Thyroid gland (tissue), 4 donors: ENCODE measurements at regions of chr20 and their contacts with region 1.

Region 1: DNA sequence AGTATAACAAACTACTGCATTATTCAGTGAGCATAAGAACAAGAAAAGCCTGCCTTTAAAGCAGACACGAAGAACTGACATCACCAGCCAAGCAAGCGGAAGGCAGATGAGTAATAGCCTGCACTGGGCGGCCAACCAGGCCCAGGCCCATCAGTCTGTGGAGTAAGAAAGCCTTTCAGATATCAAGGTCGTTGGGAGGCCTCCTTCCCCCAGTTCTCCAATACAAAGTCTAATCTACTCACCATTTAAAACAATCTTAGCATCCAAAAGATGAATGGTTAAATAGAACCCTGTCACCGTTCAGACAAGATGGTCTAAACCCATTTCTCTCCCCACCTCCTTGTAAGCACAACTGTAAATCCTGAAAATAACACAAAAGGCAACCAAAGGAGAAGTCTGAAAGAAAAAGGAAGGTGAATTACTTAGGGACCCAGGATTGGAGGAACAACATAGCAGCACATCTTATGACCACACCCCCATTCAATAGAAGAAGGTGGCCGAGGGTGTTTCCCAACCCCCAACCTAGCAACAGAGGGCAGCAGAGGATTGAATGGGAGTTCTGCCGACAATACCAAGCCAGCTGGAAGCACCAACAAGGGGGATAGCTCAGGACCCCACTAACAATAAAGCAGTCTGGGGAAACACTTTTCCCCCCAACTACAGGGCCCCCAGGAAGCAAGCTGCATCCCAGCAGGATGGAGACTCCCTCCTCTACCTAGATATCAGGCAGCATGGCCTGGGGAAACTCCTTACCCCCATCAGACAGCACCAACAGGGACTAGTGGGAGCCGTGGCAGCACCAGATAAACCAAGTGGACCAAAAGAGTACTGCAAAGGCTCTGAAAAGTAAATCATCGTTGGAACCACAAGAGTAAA is 67.9 kb downstream of the ZHX3 start:
- DNase-seq: peak; percentile 55 to 65
- H3K4me3 ChIP-seq: no peak overlapping the region
- H3K27ac ChIP-seq: peak overlapping the region; percentile 95 to 97 (median 95)
- H3K4me1 ChIP-seq: peaks cover 64 to 74% of the 10 kb centered on the region in 2 donors
- H3K27me3 ChIP-seq: no peaks in the 10 kb centered on the region
- CTCF ChIP-seq: peak in 4 of 6 experiments; percentile 7 to 32 (median 24)
- POLR2A ChIP-seq: no peak

Region 2: GRCh38 chr20:41317536-41318270 is 68.1 kb after region 1 on chr20 and contains the start of gene ZHX3:
- intact Hi-C with region 1: loop called (anchors 10 kb)
- DNase-seq: peak; percentile 98
- H3K4me3 ChIP-seq: peak within 1 kb of the TSS; percentile 47 to 90 (median 77)
- H3K27ac ChIP-seq: peak within 1 kb of the TSS; percentile 84 to 91 (median 85)
- H3K4me1 ChIP-seq: peaks cover 19 to 23% of the 10 kb centered on the region in 2 donors
- H3K27me3 ChIP-seq: no peaks in the 10 kb centered on the region
- CTCF ChIP-seq: no peak
- POLR2A ChIP-seq: peak; percentile 39 to 88
- total RNA-seq, gene ZHX3: 57.8 to 74.8 (median 60.5) TPM